ENCODE measurements at regions of chr17 and their contacts with region 1.

Region 1: GRCh38 chr17:75589012-75589918 is 1.7 kb downstream of the MYO15B start:
- DNase-seq: peak; percentile 98
- H3K4me3 ChIP-seq: peak overlapping the region; percentile 67
- H3K27ac ChIP-seq: no peak overlapping the region
- H3K4me1 ChIP-seq: peaks cover 25% of the 10 kb centered on the region
- CTCF ChIP-seq: peak; percentile 77

Region 2: DNA sequence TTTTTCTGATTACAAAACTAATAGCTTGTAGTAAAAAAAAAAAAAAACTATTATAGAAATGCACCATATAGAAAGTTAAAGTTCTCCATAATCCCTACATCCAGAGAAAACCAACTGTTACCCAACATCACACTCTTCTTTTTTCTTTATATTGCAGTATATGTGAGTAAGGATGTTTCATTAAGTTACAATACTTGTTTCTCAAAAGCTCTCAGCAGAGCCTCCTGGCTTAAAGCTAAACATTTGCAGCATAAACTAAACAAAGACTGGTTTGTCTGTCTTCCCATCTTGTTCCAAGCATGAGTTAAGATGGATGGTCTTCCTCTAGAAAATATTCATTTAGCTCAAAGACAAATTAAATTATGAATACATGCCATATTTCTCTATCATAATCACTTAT is 208.9 kb before region 1 on chr17:
- CTCF ChIA-PET with region 1: no interaction called
- POLR2A ChIA-PET with region 1: no interaction called
- intact Hi-C with region 1: no loop called
- DNase-seq: no peak
- H3K4me3 ChIP-seq: no peak overlapping the region
- H3K27ac ChIP-seq: no peak overlapping the region
- H3K4me1 ChIP-seq: peaks cover 69% of the 10 kb centered on the region
- CTCF ChIP-seq: no peak

Region 3: GRCh38 chr17:75430159-75430974 is 158.9 kb before region 1 on chr17:
- CTCF ChIA-PET with region 1: interaction called, 3 read pairs
- POLR2A ChIA-PET with region 1: no interaction called
- intact Hi-C with region 1: loop called (anchors 1 kb)
- DNase-seq: no peak
- H3K4me3 ChIP-seq: no peak overlapping the region
- H3K27ac ChIP-seq: no peak overlapping the region
- H3K4me1 ChIP-seq: peaks cover 7% of the 10 kb centered on the region
- CTCF ChIP-seq: no peak

Region 4: GRCh38 chr17:75515496-75516254 is 73.6 kb before region 1 on chr17 and contains the start of gene CASKIN2:
- CTCF ChIA-PET with region 1: no interaction called
- POLR2A ChIA-PET with region 1: no interaction called
- intact Hi-C with region 1: loop called (anchors 1 kb)
- DNase-seq: peak; percentile 91
- H3K4me3 ChIP-seq: peak within 1 kb of the TSS; percentile 91
- H3K27ac ChIP-seq: peak within 1 kb of the TSS; percentile 13
- H3K4me1 ChIP-seq: peaks cover 31% of the 10 kb centered on the region
- CTCF ChIP-seq: peak; percentile 100
- total RNA-seq, gene CASKIN2: not detected in 2 replicates

Region 5: DNA sequence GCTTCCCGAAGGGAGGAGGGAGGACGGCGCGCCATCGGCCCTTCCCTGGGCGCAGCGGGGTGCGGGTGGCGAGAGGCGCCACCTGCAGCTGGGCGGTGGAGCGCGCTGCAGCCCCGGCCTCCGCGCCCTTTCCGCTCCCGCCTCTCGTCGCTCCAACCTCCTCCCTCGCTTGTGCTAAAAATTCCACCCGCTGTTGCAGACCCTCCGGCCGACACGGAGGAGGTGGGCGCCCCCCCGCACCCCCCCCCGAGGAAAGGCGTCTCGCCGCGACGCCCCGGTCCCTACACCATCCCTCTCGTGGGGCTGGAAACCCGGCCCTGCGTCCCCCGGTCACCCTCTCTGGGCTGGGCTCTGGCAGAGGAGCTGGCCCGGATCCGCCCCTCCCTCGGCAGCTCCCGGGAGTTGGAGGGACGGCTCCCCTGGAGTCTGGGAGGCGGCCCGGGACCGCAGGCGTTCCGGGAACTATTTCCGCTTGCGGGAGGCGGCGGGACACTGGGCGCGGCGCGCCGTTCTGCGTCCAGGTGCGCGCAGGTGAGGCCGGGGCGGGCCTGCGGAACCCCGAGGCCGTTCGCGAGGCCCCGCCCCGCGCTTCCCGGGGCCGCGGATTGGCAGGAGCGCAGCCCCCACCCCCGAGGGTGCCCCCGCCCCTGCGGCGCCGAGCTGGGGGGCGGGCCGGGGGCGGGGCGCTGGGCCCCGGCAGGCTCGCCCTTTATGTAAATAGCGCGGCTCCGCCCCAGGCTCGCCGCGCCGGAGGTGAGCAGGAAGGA is 64.1 kb before region 1 on chr17 and contains the start of gene LLGL2:
- CTCF ChIA-PET with region 1: no interaction called
- POLR2A ChIA-PET with region 1: no interaction called
- intact Hi-C with region 1: loop called (anchors 2 kb)
- DNase-seq: peak; percentile 94
- H3K4me3 ChIP-seq: peak within 1 kb of the TSS; percentile 72
- H3K27ac ChIP-seq: peak within 1 kb of the TSS; percentile 12
- H3K4me1 ChIP-seq: peaks cover 19% of the 10 kb centered on the region
- CTCF ChIP-seq: peak; percentile 75
- total RNA-seq, gene LLGL2: 10.7 and 12.6 TPM in 2 replicates

Region 6: GRCh38 chr17:75571197-75571873 is 17.9 kb before region 1 on chr17:
- CTCF ChIA-PET with region 1: no interaction called
- POLR2A ChIA-PET with region 1: interaction called, 5 read pairs
- intact Hi-C with region 1: loop called (anchors 2 kb)
- DNase-seq: peak; percentile 97
- H3K4me3 ChIP-seq: peak overlapping the region; percentile 28
- H3K27ac ChIP-seq: peak overlapping the region; percentile 61
- H3K4me1 ChIP-seq: peaks cover 40% of the 10 kb centered on the region
- CTCF ChIP-seq: no peak

Region 7: DNA sequence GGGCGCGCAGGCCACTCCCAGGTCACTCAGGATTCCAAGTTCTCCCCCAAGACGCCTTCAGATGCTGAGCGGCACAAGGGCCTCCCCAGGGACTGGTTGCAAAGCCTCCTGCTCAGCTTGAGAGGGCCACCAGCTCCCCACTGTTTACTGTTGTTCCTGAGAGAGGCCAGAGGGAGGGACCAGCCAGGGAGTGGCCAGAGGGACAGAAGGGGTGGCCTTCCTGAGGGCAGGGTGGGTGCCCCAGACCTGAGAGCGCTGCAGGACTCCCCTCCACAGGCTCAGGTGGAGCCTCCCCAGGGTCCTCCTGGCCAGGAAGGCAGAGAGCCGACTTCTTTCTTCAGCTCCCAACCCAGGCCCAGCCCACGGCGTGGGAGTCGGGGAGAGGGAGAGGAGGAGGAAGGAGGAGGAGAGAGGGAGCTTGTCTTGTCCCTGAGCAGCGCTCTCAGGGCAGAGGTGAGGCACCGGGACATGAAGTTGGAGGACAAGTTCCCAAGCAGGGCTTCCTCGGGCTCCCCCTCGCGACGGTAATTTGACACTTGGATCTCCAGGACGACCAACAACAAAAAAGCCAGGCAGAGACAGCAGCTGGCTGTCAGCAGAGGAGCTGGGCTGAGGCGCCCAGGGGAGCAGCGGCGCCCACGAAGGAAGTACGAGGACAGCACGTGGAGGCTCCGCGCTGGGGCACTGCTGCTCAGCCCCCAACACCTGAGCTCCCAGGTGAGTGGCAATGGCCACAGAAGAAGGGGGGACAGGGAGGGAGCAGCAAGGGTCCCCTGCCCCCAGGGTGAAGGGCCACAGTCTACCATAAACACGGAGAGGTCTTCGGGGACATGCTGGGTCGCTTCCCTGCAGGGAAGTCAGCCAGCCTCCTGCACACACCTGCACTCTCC is 44.5 kb after region 1 on chr17:
- CTCF ChIA-PET with region 1: no interaction called
- POLR2A ChIA-PET with region 1: no interaction called
- intact Hi-C with region 1: no loop called
- DNase-seq: peak; percentile 88
- H3K4me3 ChIP-seq: no peak overlapping the region
- H3K27ac ChIP-seq: peak overlapping the region; percentile 23
- H3K4me1 ChIP-seq: peaks cover 22% of the 10 kb centered on the region
- CTCF ChIP-seq: peak; percentile 82

Region 8: GRCh38 chr17:75970011-75970523 is 380.8 kb after region 1 on chr17:
- CTCF ChIA-PET with region 1: no interaction called
- POLR2A ChIA-PET with region 1: no interaction called
- intact Hi-C with region 1: no loop called
- DNase-seq: no peak
- H3K4me3 ChIP-seq: no peak overlapping the region
- H3K27ac ChIP-seq: no peak overlapping the region
- H3K4me1 ChIP-seq: peaks cover 4% of the 10 kb centered on the region
- CTCF ChIP-seq: no peak